HCT116 (cell line): ENCODE measurements at regions of chr5 and their contacts with region 1.

Region 1: DNA sequence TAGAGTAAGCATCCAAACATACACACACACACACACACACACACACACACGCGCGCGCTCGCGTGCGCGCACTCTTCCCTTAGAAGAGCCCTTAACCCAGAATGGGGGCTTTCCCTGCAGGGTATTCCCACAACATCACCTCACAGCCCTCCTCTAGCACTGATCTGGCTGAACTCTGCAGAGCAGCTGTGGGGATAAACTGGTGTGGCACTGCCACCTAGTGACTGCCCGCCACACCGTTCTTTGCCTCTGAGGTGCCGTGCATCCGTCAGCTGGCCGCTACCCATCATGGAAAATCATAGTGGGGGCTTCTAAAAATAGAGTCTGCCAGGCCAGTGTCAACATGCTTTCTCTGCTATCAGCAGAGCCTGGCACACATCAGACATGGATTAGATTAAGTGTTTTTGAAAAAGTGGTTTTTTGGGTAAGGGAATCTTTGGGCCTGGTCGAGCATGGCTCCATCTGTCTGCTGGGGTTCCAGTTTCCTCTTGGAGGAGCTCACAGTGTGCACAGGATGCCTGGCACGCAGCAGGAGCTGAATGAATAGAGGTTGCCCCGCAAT is 88.1 kb downstream of the KCNN2 start:
- DNase-seq: peak; percentile 21
- ATAC-seq: peak; percentile 98
- H3K4me3 ChIP-seq: no peak overlapping the region
- H3K27ac ChIP-seq: no peak overlapping the region
- H3K4me1 ChIP-seq: no peaks in the 10 kb centered on the region
- H3K27me3 ChIP-seq: 0 out of 2 replicates have a peak, but pooled peaks cover 13% of the 10 kb centered on the region
- CTCF ChIP-seq: peak; percentile 62 to 85 (median 79); a peak in 5 of 6 replicates
- POLR2A ChIP-seq: no peak
- RAD21 ChIP-seq: peak; percentile 81

Region 2: GRCh38 chr5:113612060-113612496 is 837.9 kb before region 1 on chr5:
- CTCF ChIA-PET with region 1: interaction called, 36 read pairs
- POLR2A ChIA-PET with region 1: interaction called, 3 read pairs
- RAD21 ChIA-PET with region 1: interaction called, 3 to 5 read pairs
- intact Hi-C with region 1: loop called (anchors 1 kb)
- DNase-seq: peak; percentile 13
- ATAC-seq: peak; percentile 82
- H3K4me3 ChIP-seq: no peak overlapping the region
- H3K27ac ChIP-seq: no peak overlapping the region
- H3K4me1 ChIP-seq: peaks cover 0 to 5% of the 10 kb centered on the region in 2 experiments; a peak in 1 of 4 replicates
- H3K27me3 ChIP-seq: no peaks in the 10 kb centered on the region
- CTCF ChIP-seq: peak; percentile 22 to 73 (median 54); a peak in 4 of 6 replicates
- POLR2A ChIP-seq: no peak
- RAD21 ChIP-seq: peak; percentile 78

Region 3: DNA sequence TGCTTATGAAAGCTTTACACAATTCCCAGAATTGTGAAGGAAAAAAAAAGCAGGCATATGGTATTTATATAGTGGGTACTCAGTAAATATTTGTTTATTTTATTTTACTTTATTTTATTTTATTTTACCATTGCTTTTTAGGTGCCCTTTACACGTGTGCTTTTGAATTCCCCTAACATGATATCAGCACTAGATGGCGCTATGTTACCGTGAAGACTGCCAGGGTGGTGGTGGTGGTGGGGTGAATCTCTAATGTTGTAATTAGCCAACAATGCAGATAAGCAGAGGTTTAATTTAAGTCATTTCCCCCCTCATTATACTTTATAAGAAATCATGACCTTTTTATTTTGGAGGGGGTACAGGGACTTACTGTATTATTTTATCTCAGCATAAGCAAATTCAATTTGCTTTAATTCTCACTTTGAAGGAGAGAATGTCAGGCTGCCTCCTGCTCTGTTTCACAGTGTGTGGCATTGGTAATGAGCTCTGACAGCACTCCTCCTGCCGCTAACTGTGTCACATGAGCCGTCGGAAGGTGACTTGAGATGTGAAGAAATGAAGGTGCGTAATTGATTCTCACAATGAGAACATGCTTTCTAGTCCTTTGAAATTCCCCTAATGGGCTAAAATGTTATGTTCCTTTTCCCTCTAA is 770.9 kb before region 1 on chr5:
- CTCF ChIA-PET with region 1: interaction called, 26 read pairs
- POLR2A ChIA-PET with region 1: no interaction called
- RAD21 ChIA-PET with region 1: no interaction called
- intact Hi-C with region 1: loop called (anchors 1 kb)
- DNase-seq: peak; percentile 50
- ATAC-seq: peak; percentile 95
- H3K4me3 ChIP-seq: no peak overlapping the region
- H3K27ac ChIP-seq: no peak overlapping the region
- H3K4me1 ChIP-seq: no peaks in the 10 kb centered on the region
- H3K27me3 ChIP-seq: no peaks in the 10 kb centered on the region
- CTCF ChIP-seq: peak; percentile 74 to 80 (median 78); a peak in 5 of 6 replicates
- POLR2A ChIP-seq: no peak
- RAD21 ChIP-seq: peak; percentile 91

Region 4: DNA sequence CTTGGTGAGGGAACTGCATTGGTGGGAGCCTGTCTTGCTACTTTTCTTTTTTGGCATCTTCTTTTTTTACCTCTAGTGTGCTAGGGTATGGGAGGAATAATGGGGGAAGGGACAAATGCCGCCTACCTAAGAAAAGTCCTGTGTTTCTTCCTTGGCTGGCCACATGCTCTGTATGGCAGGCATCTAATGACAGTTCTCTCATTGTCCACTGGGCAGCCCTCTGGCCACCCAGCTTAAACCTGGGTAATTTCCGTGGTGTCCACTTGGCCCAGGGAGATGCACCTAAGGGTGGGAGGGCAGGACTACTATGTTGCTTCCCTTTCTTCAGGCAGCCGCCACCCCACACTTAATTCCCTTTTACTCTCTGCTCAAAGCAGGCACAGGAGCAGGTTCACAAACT is 763.3 kb before region 1 on chr5:
- CTCF ChIA-PET with region 1: interaction called, 26 read pairs
- POLR2A ChIA-PET with region 1: no interaction called
- RAD21 ChIA-PET with region 1: no interaction called
- intact Hi-C with region 1: no loop called
- DNase-seq: no peak
- ATAC-seq: peak; percentile 62
- H3K4me3 ChIP-seq: no peak overlapping the region
- H3K27ac ChIP-seq: no peak overlapping the region
- H3K4me1 ChIP-seq: no peaks in the 10 kb centered on the region
- H3K27me3 ChIP-seq: peaks cover 38% of the 10 kb centered on the region; the same call in 1 of the 2 replicates
- CTCF ChIP-seq: peak in 1 of 3 experiments; percentile 18; a peak in 1 of 6 replicates
- POLR2A ChIP-seq: no peak
- RAD21 ChIP-seq: no peak

Region 5: DNA sequence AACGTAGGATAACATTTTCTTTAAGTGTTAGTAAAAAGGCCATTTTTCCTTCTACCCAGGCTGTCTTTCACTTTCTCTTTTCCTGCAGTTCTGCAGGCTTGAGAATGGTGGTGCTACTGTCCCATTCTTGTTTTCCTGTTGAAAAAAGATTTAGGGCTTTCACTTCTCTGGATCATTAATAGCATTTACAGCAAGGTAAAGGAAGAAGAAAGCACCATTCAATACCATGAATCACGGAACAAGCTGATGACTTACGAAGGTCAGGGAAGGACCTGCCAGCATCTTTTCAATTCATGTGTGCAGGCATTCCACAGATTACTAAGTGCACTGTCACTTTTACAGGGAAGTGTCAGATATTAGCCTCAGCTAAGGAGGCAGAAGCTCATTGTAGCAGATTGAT is 643.7 kb before region 1 on chr5:
- CTCF ChIA-PET with region 1: interaction called, 13 read pairs
- POLR2A ChIA-PET with region 1: no interaction called
- RAD21 ChIA-PET with region 1: no interaction called
- intact Hi-C with region 1: loop called (anchors 5 kb)
- DNase-seq: no peak
- ATAC-seq: peak; percentile 63
- H3K4me3 ChIP-seq: no peak overlapping the region
- H3K27ac ChIP-seq: no peak overlapping the region
- H3K4me1 ChIP-seq: no peaks in the 10 kb centered on the region
- H3K27me3 ChIP-seq: peaks cover 39% of the 10 kb centered on the region
- CTCF ChIP-seq: peak; percentile 35 to 62 (median 40); a peak in 5 of 6 replicates
- POLR2A ChIP-seq: no peak
- RAD21 ChIP-seq: peak; percentile 64

Region 6: DNA sequence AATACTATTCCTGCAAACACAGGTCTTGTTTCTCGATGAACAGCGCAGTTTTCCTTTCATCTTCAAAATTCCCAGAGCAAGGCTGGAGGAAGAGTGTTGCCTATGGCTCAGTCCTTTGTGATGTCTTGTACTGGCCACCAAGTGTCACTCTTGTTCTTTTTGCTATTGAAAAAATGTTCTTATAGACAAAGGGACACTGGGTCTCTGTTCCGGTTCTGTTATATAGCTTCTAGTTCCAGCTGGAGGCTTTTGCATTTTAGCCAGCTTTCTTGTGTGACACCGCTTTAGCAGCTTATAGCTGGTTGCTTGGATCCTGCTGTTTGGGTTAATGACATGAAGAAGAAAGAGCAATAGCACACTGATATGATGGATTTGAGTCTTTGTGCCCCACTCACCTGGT is 431.8 kb before region 1 on chr5:
- CTCF ChIA-PET with region 1: interaction called, 16 read pairs
- POLR2A ChIA-PET with region 1: no interaction called
- RAD21 ChIA-PET with region 1: no interaction called
- intact Hi-C with region 1: loop called (anchors 5 kb)
- DNase-seq: no peak
- ATAC-seq: no peak
- H3K4me3 ChIP-seq: no peak overlapping the region
- H3K27ac ChIP-seq: no peak overlapping the region
- H3K4me1 ChIP-seq: no peaks in the 10 kb centered on the region
- H3K27me3 ChIP-seq: peaks cover 5% of the 10 kb centered on the region; the same call in 1 of the 2 replicates
- CTCF ChIP-seq: peak; percentile 10 to 42 (median 13); a peak in 2 of 6 replicates
- POLR2A ChIP-seq: no peak
- RAD21 ChIP-seq: peak; percentile 47

Region 7: GRCh38 chr5:114101153-114101552 is 348.8 kb before region 1 on chr5:
- CTCF ChIA-PET with region 1: interaction called, 4 read pairs
- POLR2A ChIA-PET with region 1: no interaction called
- RAD21 ChIA-PET with region 1: no interaction called
- intact Hi-C with region 1: loop called (anchors 2 kb)
- DNase-seq: peak; percentile 26
- ATAC-seq: peak; percentile 80
- H3K4me3 ChIP-seq: no peak overlapping the region
- H3K27ac ChIP-seq: no peak overlapping the region
- H3K4me1 ChIP-seq: no peaks in the 10 kb centered on the region
- H3K27me3 ChIP-seq: 0 out of 2 replicates have a peak, but pooled peaks cover 8% of the 10 kb centered on the region
- CTCF ChIP-seq: peak; percentile 44 to 50 (median 48); a peak in 4 of 6 replicates
- POLR2A ChIP-seq: no peak
- RAD21 ChIP-seq: peak; percentile 62

Region 8: DNA sequence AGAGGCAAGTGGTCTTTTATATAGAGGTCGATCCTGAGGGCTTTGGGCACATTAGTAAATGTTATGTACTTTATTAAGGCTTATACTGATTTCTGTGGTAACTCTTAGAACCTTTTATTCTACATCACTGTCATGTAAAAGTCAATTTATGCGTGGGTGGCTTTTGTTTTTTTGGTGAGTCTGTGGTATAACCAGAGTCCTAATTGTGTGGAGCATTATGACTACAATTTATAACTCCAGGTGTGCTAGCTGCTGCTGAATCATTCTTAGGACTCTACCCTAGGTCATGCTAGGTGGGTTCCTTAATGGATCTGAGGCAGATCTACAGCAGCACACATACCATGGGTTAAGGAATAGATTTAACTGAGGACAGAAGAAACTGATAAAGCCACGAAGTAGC is 122.0 kb before region 1 on chr5:
- CTCF ChIA-PET with region 1: no interaction called
- POLR2A ChIA-PET with region 1: no interaction called
- RAD21 ChIA-PET with region 1: no interaction called
- intact Hi-C with region 1: no loop called
- DNase-seq: no peak
- ATAC-seq: no peak
- H3K4me3 ChIP-seq: no peak overlapping the region
- H3K27ac ChIP-seq: no peak overlapping the region
- H3K4me1 ChIP-seq: no peaks in the 10 kb centered on the region
- H3K27me3 ChIP-seq: peaks cover 7% of the 10 kb centered on the region; the same call in 1 of the 2 replicates
- CTCF ChIP-seq: no peak
- POLR2A ChIP-seq: no peak
- RAD21 ChIP-seq: no peak

Region 9: GRCh38 chr5:114500756-114501155 is 50.8 kb after region 1 on chr5:
- CTCF ChIA-PET with region 1: no interaction called
- POLR2A ChIA-PET with region 1: no interaction called
- RAD21 ChIA-PET with region 1: no interaction called
- intact Hi-C with region 1: no loop called
- DNase-seq: no peak
- ATAC-seq: no peak
- H3K4me3 ChIP-seq: no peak overlapping the region
- H3K27ac ChIP-seq: no peak overlapping the region
- H3K4me1 ChIP-seq: no peaks in the 10 kb centered on the region
- H3K27me3 ChIP-seq: peaks cover 4% of the 10 kb centered on the region; the same call in 1 of the 2 replicates
- CTCF ChIP-seq: no peak
- POLR2A ChIP-seq: no peak
- RAD21 ChIP-seq: no peak

Region 10: DNA sequence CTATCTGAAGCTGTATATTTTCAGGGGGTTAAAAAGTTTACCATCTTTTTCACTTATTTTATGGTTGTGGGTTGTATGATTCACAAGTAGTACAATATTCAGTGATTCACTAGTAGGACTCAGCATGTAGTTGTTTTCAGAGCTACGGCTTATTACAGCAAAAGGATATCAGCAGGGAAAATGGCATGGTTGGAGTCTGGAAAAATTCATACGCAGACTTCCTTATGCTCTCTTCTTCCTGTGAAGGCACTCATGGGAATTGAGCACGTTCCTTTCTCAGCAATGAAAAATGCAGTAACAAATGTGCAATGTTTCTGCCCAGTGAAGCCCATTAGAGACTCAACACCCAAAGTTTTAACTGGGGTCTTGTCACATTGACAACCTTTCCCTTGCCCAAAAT is 162.5 kb after region 1 on chr5:
- CTCF ChIA-PET with region 1: no interaction called
- POLR2A ChIA-PET with region 1: no interaction called
- RAD21 ChIA-PET with region 1: no interaction called
- intact Hi-C with region 1: no loop called
- DNase-seq: no peak
- ATAC-seq: no peak
- H3K4me3 ChIP-seq: no peak overlapping the region
- H3K27ac ChIP-seq: no peak overlapping the region
- H3K4me1 ChIP-seq: no peaks in the 10 kb centered on the region
- H3K27me3 ChIP-seq: no peaks in the 10 kb centered on the region
- CTCF ChIP-seq: no peak
- POLR2A ChIP-seq: no peak
- RAD21 ChIP-seq: no peak

Region 11: GRCh38 chr5:114830114-114830513 is 380.2 kb after region 1 on chr5:
- CTCF ChIA-PET with region 1: no interaction called
- POLR2A ChIA-PET with region 1: no interaction called
- RAD21 ChIA-PET with region 1: no interaction called
- intact Hi-C with region 1: no loop called
- DNase-seq: no peak
- ATAC-seq: no peak
- H3K4me3 ChIP-seq: no peak overlapping the region
- H3K27ac ChIP-seq: no peak overlapping the region
- H3K4me1 ChIP-seq: no peaks in the 10 kb centered on the region
- H3K27me3 ChIP-seq: peaks cover 11% of the 10 kb centered on the region; the same call in 1 of the 2 replicates
- CTCF ChIP-seq: no peak
- POLR2A ChIP-seq: no peak
- RAD21 ChIP-seq: no peak